BJ (cell line): ENCODE measurements at regions of chr15 and their contacts with region 1.

Region 1: GRCh38 chr15:59492389-59493377 is 54.7 kb downstream of the FAM81A start:
- DNase-seq: no peak
- H3K4me3 ChIP-seq: no peak overlapping the region
- H3K27me3 ChIP-seq: no peaks in the 10 kb centered on the region
- CTCF ChIP-seq: peak; percentile 74

Region 2: GRCh38 chr15:58957101-58957973 is 535.3 kb before region 1 on chr15:
- CTCF ChIA-PET with region 1: interaction called, 13 read pairs
- POLR2A ChIA-PET with region 1: no interaction called
- DNase-seq: no peak
- H3K4me3 ChIP-seq: no peak overlapping the region
- H3K27me3 ChIP-seq: no peaks in the 10 kb centered on the region
- CTCF ChIP-seq: peak; percentile 86

Region 3: GRCh38 chr15:59247364-59247763 is 245.3 kb before region 1 on chr15:
- CTCF ChIA-PET with region 1: interaction called, 16 read pairs
- POLR2A ChIA-PET with region 1: no interaction called
- DNase-seq: no peak
- H3K4me3 ChIP-seq: no peak overlapping the region
- H3K27me3 ChIP-seq: no peaks in the 10 kb centered on the region
- CTCF ChIP-seq: peak; percentile 72

Region 4: DNA sequence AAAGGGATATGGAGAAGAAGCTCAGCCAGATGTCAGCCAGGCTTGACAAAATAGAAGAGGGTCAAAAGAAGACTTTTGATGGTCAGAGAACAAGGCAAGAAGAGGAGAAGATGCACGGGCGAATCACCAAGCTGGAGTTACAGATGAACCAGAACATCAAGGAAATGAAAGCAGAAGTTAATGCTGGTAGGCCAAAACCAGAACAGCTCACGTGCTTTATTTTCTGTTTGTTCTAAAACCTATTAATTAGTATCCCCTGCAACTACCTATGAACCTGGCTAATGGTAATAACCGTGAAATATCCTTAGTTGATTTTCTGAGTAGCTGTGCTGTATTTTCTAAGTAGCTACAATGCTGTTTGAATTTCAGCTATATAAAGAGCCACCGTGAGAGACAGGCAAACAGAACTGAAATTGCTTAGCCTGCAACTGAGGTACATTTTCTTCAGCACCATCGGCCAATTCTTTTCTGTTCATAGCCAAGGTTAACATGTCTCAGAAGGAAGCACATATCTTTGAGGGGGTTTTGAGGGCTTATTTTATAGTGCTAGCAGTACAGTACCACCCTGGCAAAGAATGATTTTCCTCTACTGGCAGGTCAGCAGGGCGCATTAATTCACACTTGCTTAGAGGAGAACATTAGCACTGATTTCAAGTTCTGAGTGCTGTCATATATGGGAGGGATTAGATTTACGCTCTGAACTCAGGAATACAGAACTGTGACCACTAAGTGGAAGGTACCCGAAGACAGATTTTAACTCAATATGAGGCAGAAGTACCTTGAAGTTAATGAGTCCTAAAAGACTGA is 24.2 kb after region 1 on chr15:
- CTCF ChIA-PET with region 1: interaction called, 11 read pairs
- POLR2A ChIA-PET with region 1: no interaction called
- DNase-seq: no peak
- H3K4me3 ChIP-seq: no peak overlapping the region
- H3K27me3 ChIP-seq: 0 out of 2 replicates have a peak, but pooled peaks cover 2% of the 10 kb centered on the region
- CTCF ChIP-seq: no peak